SK-N-SH (cell line): ENCODE measurements at regions of chr11 and their contacts with region 1.

Region 1: DNA sequence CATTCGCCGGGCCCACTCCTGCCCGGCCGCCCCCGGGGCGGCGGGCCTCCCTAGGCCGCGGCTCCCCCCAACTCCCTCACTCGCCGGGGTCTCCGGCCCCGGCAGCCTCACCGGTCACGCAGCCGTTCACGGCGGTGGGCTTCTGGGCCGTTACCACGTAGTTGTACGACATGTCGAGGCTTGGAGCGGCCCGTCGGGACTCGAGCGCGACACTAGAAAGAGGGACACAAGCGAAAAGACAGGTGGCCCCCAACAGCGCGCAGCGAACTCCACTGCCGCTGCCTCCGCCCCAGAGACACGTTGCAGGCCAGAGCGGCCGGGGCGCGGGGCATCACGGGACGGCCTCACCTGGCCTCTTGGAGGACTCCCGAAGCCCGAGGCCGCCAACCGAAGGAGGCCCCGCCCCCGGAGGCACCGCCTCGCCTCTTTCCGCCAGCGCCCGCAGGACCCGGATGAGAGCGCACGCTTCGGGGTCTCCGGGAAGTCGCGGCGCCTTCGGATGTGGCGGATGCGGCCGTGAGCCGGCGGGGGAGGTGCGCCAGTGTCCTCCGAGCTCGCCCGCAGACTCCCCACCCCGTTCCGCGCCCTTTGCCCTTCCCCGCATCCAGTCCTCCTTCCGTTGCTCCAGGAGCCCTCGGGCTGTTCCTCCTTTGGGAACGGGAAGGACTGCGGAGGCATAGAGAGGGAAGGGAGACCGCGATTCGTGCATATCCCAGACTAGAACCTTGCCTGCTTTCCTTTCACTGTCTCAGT is at the starts of genes DDB1 and TKFC:
- DNase-seq: peak; percentile 99
- H3K4me3 ChIP-seq: peak within 1 kb of the TSS; percentile 92 to 93
- H3K27ac ChIP-seq: peak within 1 kb of the TSS; percentile 74 to 96
- H3K4me1 ChIP-seq: peaks cover 21 to 40% of the 10 kb centered on the region in 2 experiments
- H3K27me3 ChIP-seq: no peaks in the 10 kb centered on the region
- CTCF ChIP-seq: no peak
- EP300 ChIP-seq: no peak
- RAD21 ChIP-seq: no peak
- polyA plus RNA-seq, gene DDB1: 170 and 224 TPM in 2 replicates
- polyA plus RNA-seq, gene TKFC: 71.0 and 72.0 TPM in 2 replicates

Region 2: GRCh38 chr11:61061081-61061826 is 271.7 kb before region 1 on chr11:
- CTCF ChIA-PET with region 1: no interaction called
- POLR2A ChIA-PET with region 1: no interaction called
- DNase-seq: no peak
- H3K4me3 ChIP-seq: no peak overlapping the region
- H3K27ac ChIP-seq: no peak overlapping the region
- H3K4me1 ChIP-seq: peaks cover 5 to 13% of the 10 kb centered on the region in 2 experiments; a peak in 1 of 4 replicates
- H3K27me3 ChIP-seq: no peaks in the 10 kb centered on the region; the same call in 1 of the 2 replicates
- CTCF ChIP-seq: no peak
- EP300 ChIP-seq: no peak
- RAD21 ChIP-seq: no peak

Region 3: DNA sequence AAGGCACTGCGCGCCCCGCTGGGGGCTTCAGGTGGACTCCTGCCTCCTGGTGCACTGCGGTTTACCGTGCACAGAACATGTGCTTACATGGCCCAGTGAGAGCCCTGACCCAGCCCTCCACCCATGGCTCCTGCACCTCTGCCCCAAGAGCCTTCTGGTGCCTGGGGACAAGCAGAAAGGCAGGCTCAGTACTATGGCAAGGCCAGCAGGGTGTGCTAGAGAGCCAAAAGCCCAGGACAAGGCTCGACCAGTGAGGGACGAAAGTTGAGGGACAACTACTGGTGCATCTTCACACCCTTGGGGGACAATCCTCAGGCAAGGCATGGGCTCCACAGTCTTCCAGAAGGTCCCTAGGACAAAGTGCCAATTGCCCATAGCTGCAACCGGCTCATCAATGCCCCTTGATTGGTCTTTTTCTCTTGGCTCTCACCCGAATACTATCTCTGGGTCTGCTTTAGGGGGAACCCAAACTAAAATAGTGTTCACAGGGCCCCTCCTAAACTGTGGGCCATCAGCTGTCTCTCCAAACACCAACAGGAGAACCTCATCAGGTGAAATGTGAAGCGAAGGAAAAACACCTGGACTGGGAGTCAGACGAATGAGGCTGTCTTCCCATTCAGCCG is 78.5 kb before region 1 on chr11:
- CTCF ChIA-PET with region 1: interaction called, 14 read pairs
- POLR2A ChIA-PET with region 1: no interaction called
- DNase-seq: peak; percentile 76
- H3K4me3 ChIP-seq: no peak overlapping the region; a peak in 1 of 4 replicates
- H3K27ac ChIP-seq: no peak overlapping the region
- H3K4me1 ChIP-seq: peaks cover 0 to 22% of the 10 kb centered on the region in 2 experiments; a peak in 1 of 4 replicates
- H3K27me3 ChIP-seq: no peaks in the 10 kb centered on the region
- CTCF ChIP-seq: peak; percentile 77
- EP300 ChIP-seq: no peak
- RAD21 ChIP-seq: peak; percentile 75

Region 4: GRCh38 chr11:61361686-61362541 is 28.9 kb after region 1 on chr11 and contains the starts of genes CYB561A3 and TMEM138:
- CTCF ChIA-PET with region 1: interaction called, 93 read pairs
- POLR2A ChIA-PET with region 1: interaction called, 48 read pairs
- DNase-seq: peak; percentile 93
- H3K4me3 ChIP-seq: peak within 1 kb of the TSS; percentile 68 to 71
- H3K27ac ChIP-seq: peak within 1 kb of the TSS; percentile 98 to 99
- H3K4me1 ChIP-seq: peaks cover 9 to 14% of the 10 kb centered on the region in 2 experiments; a peak in 3 of 4 replicates
- H3K27me3 ChIP-seq: no peaks in the 10 kb centered on the region
- CTCF ChIP-seq: no peak
- EP300 ChIP-seq: no peak
- RAD21 ChIP-seq: no peak
- polyA plus RNA-seq, gene CYB561A3: 70.0 and 76.4 TPM in 2 replicates
- polyA plus RNA-seq, gene TMEM138: 82.2 and 129 TPM in 2 replicates

Region 5: GRCh38 chr11:61378713-61379313 is 45.8 kb after region 1 on chr11:
- CTCF ChIA-PET with region 1: interaction called, 300 read pairs
- POLR2A ChIA-PET with region 1: interaction called, 12 read pairs
- DNase-seq: no peak
- H3K4me3 ChIP-seq: no peak overlapping the region
- H3K27ac ChIP-seq: no peak overlapping the region; a peak in 1 of 4 replicates
- H3K4me1 ChIP-seq: peaks cover 0 to 7% of the 10 kb centered on the region in 2 experiments; a peak in 1 of 4 replicates
- H3K27me3 ChIP-seq: no peaks in the 10 kb centered on the region
- CTCF ChIP-seq: no peak
- EP300 ChIP-seq: no peak
- RAD21 ChIP-seq: no peak

Region 6: DNA sequence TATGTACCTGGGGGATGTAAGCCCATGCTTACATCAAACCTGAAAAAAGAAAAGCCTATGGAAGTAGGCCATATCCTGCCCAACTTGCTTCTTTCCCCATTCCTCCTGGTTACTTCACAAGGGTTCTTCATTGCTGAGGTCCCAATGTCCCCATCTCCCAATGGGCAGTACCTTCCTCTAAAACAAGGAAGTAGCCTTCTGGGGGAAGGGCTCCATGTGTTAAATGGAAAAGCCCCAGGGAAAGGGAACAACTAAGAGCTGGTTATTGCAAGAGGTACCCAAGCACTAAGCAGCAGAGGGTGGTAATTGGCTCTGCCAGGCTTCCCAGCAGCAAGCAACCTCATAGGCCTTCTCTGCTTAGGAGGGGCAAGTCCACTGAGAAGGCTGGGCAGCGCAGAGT is 70.7 kb after region 1 on chr11:
- CTCF ChIA-PET with region 1: interaction called, 16 read pairs
- POLR2A ChIA-PET with region 1: no interaction called
- DNase-seq: no peak
- H3K4me3 ChIP-seq: no peak overlapping the region
- H3K27ac ChIP-seq: no peak overlapping the region
- H3K4me1 ChIP-seq: no peaks in the 10 kb centered on the region
- H3K27me3 ChIP-seq: no peaks in the 10 kb centered on the region
- CTCF ChIP-seq: no peak
- EP300 ChIP-seq: no peak
- RAD21 ChIP-seq: no peak